HepG2 (cell line): ENCODE measurements at regions of chr1 and their contacts with region 1.

Region 1: GRCh38 chr1:220733090-220733601 is 15.0 kb upstream of the MTARC2 start:
- DNase-seq: peak; percentile 77
- ATAC-seq: peak; percentile 79
- H3K4me3 ChIP-seq: peak overlapping the region in 2 of 3 experiments; percentile 43 to 52; a peak in 3 of 6 replicates
- H3K27ac ChIP-seq: no peak overlapping the region
- H3K4me1 ChIP-seq: peaks cover 31% of the 10 kb centered on the region
- H3K27me3 ChIP-seq: no peaks in the 10 kb centered on the region
- CTCF ChIP-seq: peak; percentile 91
- EP300 ChIP-seq: 0 out of 4 replicates have a peak, but pooled peaks of 1 of the 2 experiments have one; percentile 9
- POLR2A ChIP-seq: no peak
- RAD21 ChIP-seq: peak; percentile 83

Region 2: DNA sequence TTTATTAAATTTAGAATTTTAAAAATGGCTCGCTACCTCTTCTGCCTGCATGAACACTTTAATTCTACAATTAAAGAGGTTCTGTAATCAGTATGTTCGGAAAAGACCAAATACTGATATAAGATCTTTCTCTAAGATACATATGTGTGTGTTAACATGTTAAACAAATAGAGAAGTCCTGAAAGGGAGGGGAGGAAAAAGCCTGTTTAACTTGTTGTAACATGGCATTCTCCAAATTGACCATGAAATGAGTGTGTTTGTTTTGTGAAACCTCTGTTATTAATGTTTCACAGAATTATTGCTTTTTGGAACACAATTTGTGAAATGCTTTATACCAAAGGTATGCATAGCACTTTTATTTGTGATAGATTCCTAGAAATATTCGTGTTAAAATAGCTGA is 128.2 kb before region 1 on chr1:
- CTCF ChIA-PET with region 1: no interaction called
- POLR2A ChIA-PET with region 1: no interaction called
- in situ Hi-C with region 1: no loop called
- intact Hi-C with region 1: no loop called
- DNase-seq: no peak
- ATAC-seq: no peak
- H3K4me3 ChIP-seq: no peak overlapping the region
- H3K27ac ChIP-seq: no peak overlapping the region
- H3K4me1 ChIP-seq: no peaks in the 10 kb centered on the region
- H3K27me3 ChIP-seq: no peaks in the 10 kb centered on the region
- CTCF ChIP-seq: no peak
- EP300 ChIP-seq: no peak
- POLR2A ChIP-seq: no peak
- RAD21 ChIP-seq: no peak

Region 3: DNA sequence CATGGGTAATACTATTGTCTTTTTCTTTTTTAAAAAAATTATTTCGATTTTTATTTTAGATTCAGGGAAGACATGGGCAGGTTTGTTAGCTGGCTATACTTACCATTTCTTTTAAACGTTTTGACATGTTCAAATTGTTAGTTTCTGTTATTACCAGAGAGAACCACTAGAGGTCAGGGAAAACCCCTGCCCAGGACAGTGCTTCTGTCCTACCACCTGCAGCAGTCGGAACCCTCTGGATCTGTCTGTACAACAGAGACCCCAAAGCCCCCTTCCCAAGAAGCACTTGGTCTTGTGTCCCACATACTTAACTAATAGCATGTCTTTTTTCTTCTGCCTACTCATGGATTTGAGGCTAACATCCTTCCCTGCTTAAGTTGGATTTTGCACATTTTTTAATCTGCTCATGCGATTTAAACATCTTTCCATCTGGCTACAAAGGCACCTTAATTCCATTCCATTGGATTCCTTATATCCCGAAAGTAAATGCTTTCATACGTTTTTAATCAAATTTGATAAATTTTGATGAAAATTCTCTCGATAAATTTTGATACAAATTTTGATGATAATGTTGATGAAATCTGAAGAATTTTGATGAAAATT is 53.0 kb before region 1 on chr1:
- CTCF ChIA-PET with region 1: interaction called, 23 read pairs
- POLR2A ChIA-PET with region 1: interaction called, 3 read pairs
- in situ Hi-C with region 1: no loop called
- intact Hi-C with region 1: loop called (anchors 1 kb)
- DNase-seq: peak; percentile 42
- ATAC-seq: peak; percentile 93
- H3K4me3 ChIP-seq: no peak overlapping the region
- H3K27ac ChIP-seq: no peak overlapping the region
- H3K4me1 ChIP-seq: peaks cover 12% of the 10 kb centered on the region
- H3K27me3 ChIP-seq: no peaks in the 10 kb centered on the region
- CTCF ChIP-seq: peak; percentile 79
- EP300 ChIP-seq: no peak
- POLR2A ChIP-seq: no peak
- RAD21 ChIP-seq: peak; percentile 68

Region 4: GRCh38 chr1:220690140-220691025 is 42.8 kb before region 1 on chr1 and contains the start of gene C1orf115:
- CTCF ChIA-PET with region 1: interaction called, 33 read pairs
- POLR2A ChIA-PET with region 1: interaction called, 9 read pairs
- in situ Hi-C with region 1: loop called (anchors 5 kb)
- intact Hi-C with region 1: loop called (anchors 1 kb)
- DNase-seq: peak; percentile 68
- ATAC-seq: peak; percentile 85
- H3K4me3 ChIP-seq: peak within 1 kb of the TSS; percentile 81 to 86 (median 82)
- H3K27ac ChIP-seq: peak within 1 kb of the TSS; percentile 61
- H3K4me1 ChIP-seq: peaks cover 45% of the 10 kb centered on the region
- H3K27me3 ChIP-seq: no peaks in the 10 kb centered on the region; a peak in 2 of 5 replicates
- CTCF ChIP-seq: peak; percentile 94
- EP300 ChIP-seq: no peak; a peak in 1 of 4 replicates
- POLR2A ChIP-seq: peak; percentile 63 to 87
- RAD21 ChIP-seq: peak; percentile 96
- total RNA-seq, gene C1orf115: 85.9 and 86.7 TPM in 2 replicates

Region 5: GRCh38 chr1:220696866-220697231 is 36.3 kb before region 1 on chr1:
- CTCF ChIA-PET with region 1: no interaction called
- POLR2A ChIA-PET with region 1: interaction called, 9 read pairs
- in situ Hi-C with region 1: loop called (anchors 5 kb)
- intact Hi-C with region 1: no loop called
- DNase-seq: no peak
- ATAC-seq: no peak
- H3K4me3 ChIP-seq: no peak overlapping the region
- H3K27ac ChIP-seq: no peak overlapping the region
- H3K4me1 ChIP-seq: peaks cover 70% of the 10 kb centered on the region
- H3K27me3 ChIP-seq: no peaks in the 10 kb centered on the region; a peak in 1 of 5 replicates
- CTCF ChIP-seq: no peak
- EP300 ChIP-seq: no peak
- POLR2A ChIP-seq: no peak
- RAD21 ChIP-seq: no peak

Region 6: GRCh38 chr1:220748089-220748934 is 15.2 kb after region 1 on chr1 and contains the start of gene MTARC2:
- CTCF ChIA-PET with region 1: interaction called, 5 read pairs
- POLR2A ChIA-PET with region 1: interaction called, 59 read pairs
- in situ Hi-C with region 1: no loop called
- intact Hi-C with region 1: loop called (anchors 1 kb)
- DNase-seq: peak; percentile 83
- ATAC-seq: peak; percentile 93
- H3K4me3 ChIP-seq: peak within 1 kb of the TSS; percentile 65 to 87 (median 79)
- H3K27ac ChIP-seq: peak within 1 kb of the TSS; percentile 68
- H3K4me1 ChIP-seq: peaks cover 57% of the 10 kb centered on the region
- H3K27me3 ChIP-seq: peaks cover 0 to 16% of the 10 kb centered on the region in 2 experiments; a peak in 3 of 5 replicates
- CTCF ChIP-seq: peak; percentile 3; the same call in 1 of the 2 replicates
- EP300 ChIP-seq: peak in 1 of 2 experiments; percentile 27; a peak in 1 of 4 replicates
- POLR2A ChIP-seq: peak; percentile 80 to 89
- RAD21 ChIP-seq: no peak
- total RNA-seq, gene MTARC2: 4.7 and 10.1 TPM in 2 replicates

Region 7: GRCh38 chr1:220767312-220768125 is 34.4 kb after region 1 on chr1:
- CTCF ChIA-PET with region 1: no interaction called
- POLR2A ChIA-PET with region 1: interaction called, 27 read pairs
- in situ Hi-C with region 1: no loop called
- intact Hi-C with region 1: loop called (anchors 1 kb)
- DNase-seq: peak; percentile 78
- ATAC-seq: peak; percentile 93
- H3K4me3 ChIP-seq: peak overlapping the region; percentile 34 to 55 (median 34); a peak in 5 of 6 replicates
- H3K27ac ChIP-seq: peak overlapping the region; percentile 87
- H3K4me1 ChIP-seq: peaks cover 49% of the 10 kb centered on the region
- H3K27me3 ChIP-seq: no peaks in the 10 kb centered on the region
- CTCF ChIP-seq: no peak
- EP300 ChIP-seq: peak in 1 of 2 experiments; percentile 70; a peak in 2 of 4 replicates
- POLR2A ChIP-seq: no peak
- RAD21 ChIP-seq: no peak